ENCODE measurements at regions of chr3 and their contacts with region 1.

Region 1: GRCh38 chr3:138834359-138835212 is at the start of gene PIK3CB:
- DNase-seq: peak; percentile 88 to 93 (median 93)
- H3K4me3 ChIP-seq: peak within 1 kb of the TSS; percentile 51 to 90 (median 88)
- H3K27ac ChIP-seq: peak within 1 kb of the TSS; percentile 82 to 98 (median 93)
- H3K4me1 ChIP-seq: peaks cover 0 to 15% of the 10 kb centered on the region in 2 donors
- H3K27me3 ChIP-seq: no peaks in the 10 kb centered on the region
- CTCF ChIP-seq: peak in 3 of 6 experiments; percentile 37 to 45 (median 38)
- POLR2A ChIP-seq: peak; percentile 92 to 97
- total RNA-seq, gene PIK3CB: 7.7 to 26.0 (median 16.0) TPM

Region 2: DNA sequence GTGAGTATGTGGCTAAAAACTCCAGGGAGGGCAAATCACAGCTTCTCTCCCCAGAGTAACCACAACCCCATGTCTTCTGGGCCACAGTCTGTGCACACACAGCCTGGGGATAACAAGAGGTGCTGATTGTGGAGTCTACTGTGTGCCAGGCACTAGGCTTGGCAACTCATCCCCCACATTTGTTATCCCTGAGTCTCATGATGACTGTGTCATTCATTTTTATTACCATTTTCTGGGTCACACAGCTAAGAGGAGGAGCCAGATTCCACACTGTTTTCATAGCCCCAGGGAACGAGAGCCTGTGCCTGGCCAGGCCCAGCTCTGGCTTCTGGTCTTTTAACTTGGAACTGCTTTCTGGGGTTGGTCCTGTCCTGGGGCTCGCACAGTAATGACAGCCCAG is 365.7 kb before region 1 on chr3:
- intact Hi-C with region 1: no loop called
- DNase-seq: peak in 1 of 7 donors; percentile 60
- H3K4me3 ChIP-seq: no peak overlapping the region
- H3K27ac ChIP-seq: no peak overlapping the region
- H3K4me1 ChIP-seq: no peaks in the 10 kb centered on the region
- H3K27me3 ChIP-seq: no peaks in the 10 kb centered on the region
- CTCF ChIP-seq: no peak
- POLR2A ChIP-seq: no peak

Region 3: GRCh38 chr3:138608322-138609135 is 226.1 kb before region 1 on chr3 and contains the start of gene FAIM:
- intact Hi-C with region 1: loop called in 1 of 2 experiments (anchors 10 kb)
- DNase-seq: peak; percentile 70 to 86 (median 80)
- H3K4me3 ChIP-seq: peak within 1 kb of the TSS; percentile 3 to 99 (median 78)
- H3K27ac ChIP-seq: peak within 1 kb of the TSS; percentile 59 to 99 (median 97)
- H3K4me1 ChIP-seq: peaks cover 0 to 10% of the 10 kb centered on the region in 2 donors
- H3K27me3 ChIP-seq: no peaks in the 10 kb centered on the region
- CTCF ChIP-seq: no peak
- POLR2A ChIP-seq: peak; percentile 34 to 46
- total RNA-seq, gene FAIM: 5.5 to 15.2 (median 7.8) TPM

Measured in adrenal gland (tissue), 19 donors.